WTC11 (cell line): ENCODE measurements at regions of chr2 and their contacts with region 1.

Region 1: GRCh38 chr2:7097348-7097895 is 180.2 kb downstream of the RNF144A start:
- DNase-seq: peak; percentile 83
- ATAC-seq: peak; percentile 98
- H3K4me3 Mint-ChIP-seq: peak overlapping the region; percentile 12; the same call in 1 of the 2 replicates
- H3K27ac Mint-ChIP-seq: no peak overlapping the region
- H3K4me1 Mint-ChIP-seq: peaks cover 7% of the 10 kb centered on the region
- H3K27me3 Mint-ChIP-seq: peaks cover 8% of the 10 kb centered on the region
- CTCF ChIP-seq: peak; percentile 95

Region 2: GRCh38 chr2:6845312-6845711 is 252.1 kb before region 1 on chr2:
- CTCF ChIA-PET with region 1: no interaction called
- POLR2A ChIA-PET with region 1: no interaction called
- DNase-seq: no peak
- ATAC-seq: no peak
- H3K4me3 Mint-ChIP-seq: no peak overlapping the region
- H3K27ac Mint-ChIP-seq: no peak overlapping the region
- H3K4me1 Mint-ChIP-seq: no peaks in the 10 kb centered on the region
- H3K27me3 Mint-ChIP-seq: peaks cover 7% of the 10 kb centered on the region
- CTCF ChIP-seq: no peak

Region 3: DNA sequence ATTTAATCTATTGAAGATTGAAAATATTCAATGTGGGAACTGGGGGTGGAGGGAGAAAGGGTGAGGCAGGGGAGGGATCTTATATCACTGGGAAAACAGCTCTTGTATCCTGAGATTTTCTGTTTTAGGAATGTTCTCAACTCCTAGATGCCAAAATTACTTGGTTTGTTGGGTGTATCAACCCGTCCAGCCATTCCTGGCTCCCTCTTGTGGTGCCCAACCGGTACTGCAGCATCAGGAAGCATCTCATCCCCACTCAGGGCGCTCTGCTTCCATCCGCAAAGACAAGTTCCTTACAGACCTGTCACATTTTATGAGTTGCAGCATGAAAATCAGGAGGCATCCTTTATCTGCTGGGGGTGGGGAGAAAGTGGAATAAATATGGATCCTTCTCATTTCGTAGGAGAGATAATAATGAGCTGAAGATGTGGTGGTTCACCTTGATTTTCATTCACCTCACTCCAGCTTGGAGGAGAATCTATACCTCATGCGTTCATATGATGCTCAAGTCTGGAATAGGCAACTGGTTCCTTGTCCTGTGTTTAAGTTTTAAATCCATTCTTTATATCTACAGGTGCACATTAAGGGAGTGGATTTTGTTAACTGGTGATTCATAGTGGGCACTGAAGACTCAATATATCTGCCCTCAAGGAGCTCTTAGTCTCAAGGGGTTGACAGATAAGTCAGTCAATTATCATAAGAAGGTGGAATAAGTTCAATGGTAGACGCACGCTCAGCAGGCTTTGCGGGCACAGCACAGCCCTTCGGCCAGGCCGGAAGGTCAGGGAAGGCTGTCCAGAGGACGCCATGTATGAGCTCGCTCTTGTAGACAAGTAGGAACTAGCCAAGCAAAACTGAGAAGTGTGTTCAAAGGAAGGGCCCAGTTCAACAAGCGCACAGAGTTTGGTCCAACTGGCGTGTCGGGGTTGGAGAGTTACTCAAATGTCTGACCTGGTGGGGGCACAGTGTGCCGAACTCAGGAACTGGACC is 52.9 kb before region 1 on chr2:
- CTCF ChIA-PET with region 1: no interaction called
- POLR2A ChIA-PET with region 1: no interaction called
- DNase-seq: peak; percentile 67
- ATAC-seq: peak; percentile 85
- H3K4me3 Mint-ChIP-seq: no peak overlapping the region
- H3K27ac Mint-ChIP-seq: no peak overlapping the region
- H3K4me1 Mint-ChIP-seq: peaks cover 13% of the 10 kb centered on the region
- H3K27me3 Mint-ChIP-seq: no peaks in the 10 kb centered on the region
- CTCF ChIP-seq: peak; percentile 98

Region 4: GRCh38 chr2:7111626-7112025 is 14.2 kb after region 1 on chr2:
- CTCF ChIA-PET with region 1: interaction called, 14 read pairs
- POLR2A ChIA-PET with region 1: interaction called, 3 read pairs
- DNase-seq: no peak
- ATAC-seq: no peak
- H3K4me3 Mint-ChIP-seq: no peak overlapping the region
- H3K27ac Mint-ChIP-seq: 0 out of 2 replicates have a peak overlapping the region, but pooled peaks have one; percentile 16
- H3K4me1 Mint-ChIP-seq: peaks cover 17% of the 10 kb centered on the region
- H3K27me3 Mint-ChIP-seq: no peaks in the 10 kb centered on the region
- CTCF ChIP-seq: no peak

Region 5: DNA sequence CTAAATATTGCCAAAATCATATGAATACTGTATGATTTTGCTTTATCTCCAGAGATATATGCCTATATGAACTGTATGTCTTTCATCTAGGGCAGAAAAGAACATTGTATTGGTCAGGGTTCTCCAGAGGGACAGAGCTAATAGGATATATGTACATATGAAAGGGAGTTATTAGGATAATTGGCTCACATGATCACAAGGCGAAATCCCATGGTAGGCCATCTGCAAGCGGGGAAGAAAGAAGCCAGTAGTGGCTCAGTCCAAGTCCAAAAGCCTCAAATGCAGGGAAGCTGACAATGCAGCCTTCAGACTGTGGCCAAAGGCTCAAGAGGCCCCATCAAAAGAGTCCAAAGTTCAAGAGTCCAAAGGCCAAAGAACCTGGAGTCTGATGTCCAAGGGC is 29.7 kb after region 1 on chr2:
- CTCF ChIA-PET with region 1: no interaction called
- POLR2A ChIA-PET with region 1: no interaction called
- DNase-seq: no peak
- ATAC-seq: no peak
- H3K4me3 Mint-ChIP-seq: no peak overlapping the region
- H3K27ac Mint-ChIP-seq: no peak overlapping the region
- H3K4me1 Mint-ChIP-seq: no peaks in the 10 kb centered on the region
- H3K27me3 Mint-ChIP-seq: no peaks in the 10 kb centered on the region
- CTCF ChIP-seq: no peak